Upper lobe of right lung (tissue), 1 donor: ENCODE measurements at regions of chr6 and their contacts with region 1.

Region 1: DNA sequence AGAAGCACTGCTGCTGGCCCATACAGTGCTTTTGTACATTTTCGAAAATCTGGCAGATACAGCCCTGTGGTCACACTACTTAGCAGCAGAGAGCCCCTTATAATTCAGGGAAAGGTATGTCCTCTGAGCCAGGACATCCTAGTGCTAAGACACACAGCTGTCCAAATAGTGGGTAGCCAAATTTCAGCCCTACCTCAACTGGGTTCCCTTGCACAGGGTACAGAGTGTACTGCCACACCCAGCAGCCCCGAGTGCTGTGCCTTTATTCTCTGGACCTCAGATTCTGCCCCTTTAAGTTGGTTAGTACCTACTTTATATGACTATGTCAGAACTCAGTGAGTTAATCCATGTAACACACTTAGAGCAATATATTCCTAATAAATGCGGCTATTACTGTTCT is 47.6 kb downstream of the PRPH2 start:
- DNase-seq: no peak
- ATAC-seq: no peak
- H3K4me3 ChIP-seq: no peak overlapping the region
- H3K27ac ChIP-seq: no peak overlapping the region
- H3K4me1 ChIP-seq: no peaks in the 10 kb centered on the region
- H3K27me3 ChIP-seq: no peaks in the 10 kb centered on the region
- CTCF ChIP-seq: no peak

Region 2: GRCh38 chr6:42726485-42727086 is 51.8 kb after region 1 on chr6:
- intact Hi-C with region 1: loop called (anchors 10 kb)
- DNase-seq: peak; percentile 70
- ATAC-seq: peak; percentile 98
- H3K4me3 ChIP-seq: peak overlapping the region; percentile 61
- H3K27ac ChIP-seq: peak overlapping the region; percentile 82
- H3K4me1 ChIP-seq: peaks cover 8% of the 10 kb centered on the region
- H3K27me3 ChIP-seq: no peaks in the 10 kb centered on the region
- CTCF ChIP-seq: peak; percentile 95